Activated CD4-positive, alpha-beta T cell treated with anti-CD3 and anti-CD28 coated beads for 36 hours (primary cell): ENCODE measurements at regions of chr7 and their contacts with region 1.

Region 1: GRCh38 chr7:140479062-140479738 is at the start of gene MKRN1:
- DNase-seq: peak; percentile 97
- ATAC-seq: peak; percentile 95
- H3K4me3 Mint-ChIP-seq: peak within 1 kb of the TSS; percentile 99
- H3K27ac Mint-ChIP-seq: peak within 1 kb of the TSS; percentile 95
- H3K4me1 Mint-ChIP-seq: peaks cover 24% of the 10 kb centered on the region
- H3K27me3 Mint-ChIP-seq: no peaks in the 10 kb centered on the region
- total RNA-seq, gene MKRN1: 73.6 to 77.9 TPM

Region 2: GRCh38 chr7:140062528-140063299 is 416.5 kb before region 1 on chr7 and contains the start of gene PARP12:
- CTCF ChIA-PET with region 1: no interaction called
- POLR2A ChIA-PET with region 1: no interaction called
- intact Hi-C with region 1: loop called in 1 of 2 experiments (anchors 5 kb)
- DNase-seq: peak; percentile 91
- ATAC-seq: peak; percentile 65
- H3K4me3 Mint-ChIP-seq: peak within 1 kb of the TSS; percentile 78
- H3K27ac Mint-ChIP-seq: peak within 1 kb of the TSS; percentile 75
- H3K4me1 Mint-ChIP-seq: peaks cover 36% of the 10 kb centered on the region
- H3K27me3 Mint-ChIP-seq: no peaks in the 10 kb centered on the region
- total RNA-seq, gene PARP12: 25.7 to 28.7 TPM

Region 3: GRCh38 chr7:140397784-140398750 is 81.1 kb before region 1 on chr7 and contains the start of gene SLC37A3:
- CTCF ChIA-PET with region 1: no interaction called
- POLR2A ChIA-PET with region 1: no interaction called
- intact Hi-C with region 1: loop called (anchors 1 to 5 kb)
- DNase-seq: peak; percentile 94
- ATAC-seq: peak; percentile 86
- H3K4me3 Mint-ChIP-seq: peak within 1 kb of the TSS; percentile 88
- H3K27ac Mint-ChIP-seq: peak within 1 kb of the TSS; percentile 91
- H3K4me1 Mint-ChIP-seq: peaks cover 37% of the 10 kb centered on the region
- H3K27me3 Mint-ChIP-seq: no peaks in the 10 kb centered on the region
- total RNA-seq, gene SLC37A3: 47.5 to 55.5 TPM

Region 4: DNA sequence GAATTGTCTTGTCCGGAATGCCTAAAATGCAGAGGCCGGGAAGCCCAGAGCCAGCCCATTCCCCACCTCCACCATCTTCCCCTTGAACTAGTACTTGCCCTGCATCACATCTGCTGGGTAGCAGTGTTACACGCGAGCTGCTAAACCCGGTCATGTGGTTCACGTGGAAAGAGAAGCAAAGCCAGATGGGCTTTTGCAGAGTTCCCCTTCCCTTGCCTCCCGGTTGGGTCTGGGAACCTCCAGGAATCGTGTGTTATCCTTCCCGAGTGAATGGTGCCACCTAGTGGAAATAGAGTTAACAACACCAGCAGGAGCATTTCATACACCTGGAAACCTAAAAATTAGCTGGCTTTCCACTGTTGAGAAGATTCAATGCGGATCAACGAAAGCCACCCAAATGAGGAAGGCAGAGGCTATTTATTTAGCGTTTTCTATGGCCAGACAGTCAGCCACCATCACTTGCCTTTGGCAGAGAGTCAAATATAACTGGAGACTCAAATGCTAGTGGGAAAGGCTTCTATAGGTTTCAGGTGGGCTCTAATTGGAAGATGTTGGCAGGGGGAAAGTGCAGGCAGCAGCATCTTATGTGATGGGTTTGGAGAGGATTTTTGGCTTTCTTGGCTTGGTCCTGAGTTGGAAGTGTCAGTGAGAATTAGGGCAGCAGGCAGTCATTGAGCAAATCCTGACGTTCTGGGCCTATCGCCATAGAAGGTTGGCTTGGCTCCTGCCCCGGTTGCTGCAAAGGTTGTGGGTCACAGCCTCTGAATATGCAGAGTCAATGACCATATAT is 174.3 kb after region 1 on chr7:
- CTCF ChIA-PET with region 1: interaction called, 6 read pairs
- POLR2A ChIA-PET with region 1: no interaction called
- intact Hi-C with region 1: loop called (anchors 1 kb)
- DNase-seq: peak; percentile 46
- ATAC-seq: peak; percentile 63
- H3K4me3 Mint-ChIP-seq: no peak overlapping the region
- H3K27ac Mint-ChIP-seq: no peak overlapping the region
- H3K4me1 Mint-ChIP-seq: peaks cover 14% of the 10 kb centered on the region
- H3K27me3 Mint-ChIP-seq: peaks cover 14% of the 10 kb centered on the region

Region 5: GRCh38 chr7:140924019-140924820 is 445.0 kb after region 1 on chr7:
- CTCF ChIA-PET with region 1: no interaction called
- POLR2A ChIA-PET with region 1: no interaction called
- intact Hi-C with region 1: loop called in 1 of 2 experiments (anchors 1 kb)
- DNase-seq: peak; percentile 79
- ATAC-seq: peak; percentile 71
- H3K4me3 Mint-ChIP-seq: no peak overlapping the region
- H3K27ac Mint-ChIP-seq: no peak overlapping the region
- H3K4me1 Mint-ChIP-seq: peaks cover 9% of the 10 kb centered on the region
- H3K27me3 Mint-ChIP-seq: no peaks in the 10 kb centered on the region